B cell (primary cell): ENCODE measurements at regions of chr1 and their contacts with region 1.

Region 1: DNA sequence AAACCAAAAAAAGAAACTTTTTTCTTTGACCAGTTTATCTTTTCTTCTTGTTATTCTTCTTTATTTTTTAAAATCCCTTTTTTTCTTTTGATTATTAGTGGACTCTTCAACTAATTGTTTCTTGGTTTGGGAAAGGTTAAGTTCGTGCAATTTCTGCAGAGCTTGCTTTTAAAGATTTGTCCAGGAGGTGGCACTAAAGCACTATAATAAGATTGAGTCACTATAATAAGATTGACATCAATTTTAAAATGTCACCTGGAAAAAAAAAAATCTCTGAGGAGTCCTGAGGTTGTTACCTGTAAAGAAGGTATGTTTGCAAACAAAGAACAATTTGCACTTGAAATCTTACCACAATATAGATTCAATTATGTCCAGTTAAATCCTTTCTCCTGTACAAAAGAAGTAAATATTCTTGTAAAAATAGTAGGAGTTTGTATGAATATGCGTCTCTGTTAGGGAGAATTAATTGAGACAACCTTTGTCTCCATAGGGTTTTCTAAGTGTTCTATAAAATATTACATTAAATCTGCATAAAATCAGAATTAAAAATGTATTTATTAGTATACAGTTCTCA is 166.7 kb downstream of the ADGRL4 start:
- DNase-seq: peak; percentile 34
- ATAC-seq: no peak
- H3K4me3 ChIP-seq: no peak overlapping the region
- H3K4me3 Mint-ChIP-seq: no peak overlapping the region
- H3K27ac ChIP-seq: no peak overlapping the region
- H3K27ac Mint-ChIP-seq: no peak overlapping the region
- H3K4me1 ChIP-seq: no peaks in the 10 kb centered on the region
- H3K4me1 Mint-ChIP-seq: no peaks in the 10 kb centered on the region
- H3K27me3 ChIP-seq: no peaks in the 10 kb centered on the region
- H3K27me3 Mint-ChIP-seq: no peaks in the 10 kb centered on the region
- CTCF ChIP-seq: peak; percentile 77

Region 2: DNA sequence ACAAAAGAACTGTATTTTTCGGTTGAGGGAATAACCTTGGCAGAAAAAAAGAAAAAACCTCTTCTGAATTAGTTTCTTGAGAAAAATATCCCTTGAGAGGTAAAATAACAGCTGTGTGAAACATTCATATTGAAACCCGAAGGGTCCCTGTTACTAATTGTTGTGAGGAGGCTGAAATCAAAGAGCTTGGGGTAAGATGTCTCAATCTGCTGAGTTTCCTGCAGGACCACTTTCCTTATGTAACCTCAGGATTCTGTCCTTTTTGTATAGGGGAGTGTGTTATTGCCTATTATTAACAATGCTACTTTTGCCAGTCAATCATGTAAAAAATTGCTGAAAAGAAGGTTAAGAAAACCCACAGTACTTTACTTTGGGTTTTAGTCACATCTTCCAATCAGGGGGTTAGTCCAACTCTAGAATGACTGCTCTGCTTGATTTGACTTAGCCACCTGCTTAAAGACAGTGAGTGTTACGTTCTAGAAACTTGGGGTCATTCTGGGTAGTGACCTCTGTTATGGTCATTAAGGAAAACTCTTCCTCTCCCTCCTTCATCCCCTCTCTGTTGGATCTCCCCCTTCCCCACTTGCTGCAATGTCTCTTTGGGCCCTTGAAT is 655.2 kb before region 1 on chr1:
- CTCF ChIA-PET with region 1: no interaction called
- POLR2A ChIA-PET with region 1: no interaction called
- intact Hi-C with region 1: no loop called
- DNase-seq: no peak
- ATAC-seq: no peak
- H3K4me3 ChIP-seq: no peak overlapping the region
- H3K4me3 Mint-ChIP-seq: no peak overlapping the region
- H3K27ac ChIP-seq: no peak overlapping the region
- H3K27ac Mint-ChIP-seq: no peak overlapping the region
- H3K4me1 ChIP-seq: no peaks in the 10 kb centered on the region
- H3K4me1 Mint-ChIP-seq: no peaks in the 10 kb centered on the region
- H3K27me3 ChIP-seq: peaks cover 0 to 6% (median under 1%) of the 10 kb centered on the region in 4 experiments
- H3K27me3 Mint-ChIP-seq: peaks cover 7% of the 10 kb centered on the region
- CTCF ChIP-seq: no peak

Region 3: DNA sequence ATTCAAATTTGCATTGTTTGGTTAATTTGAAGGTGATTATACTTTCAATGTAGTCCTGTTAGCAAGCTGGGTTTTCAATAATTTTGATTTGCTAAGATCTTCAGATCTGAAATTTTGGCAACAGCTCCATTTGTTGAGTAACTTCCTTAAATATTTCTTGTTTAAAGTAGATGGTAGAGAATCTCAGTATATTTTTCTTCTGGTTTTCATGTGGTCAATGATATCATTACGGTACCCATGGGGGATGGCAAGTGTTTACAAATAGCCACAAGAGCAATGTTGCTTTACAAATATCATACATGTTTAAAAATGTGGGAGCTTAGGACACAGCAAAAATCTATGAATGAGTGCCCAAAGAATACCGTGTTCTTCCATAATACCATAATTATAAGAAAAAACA is 14.2 kb before region 1 on chr1:
- CTCF ChIA-PET with region 1: interaction called, 10 read pairs
- POLR2A ChIA-PET with region 1: no interaction called
- intact Hi-C with region 1: no loop called
- DNase-seq: no peak
- ATAC-seq: no peak
- H3K4me3 ChIP-seq: no peak overlapping the region
- H3K4me3 Mint-ChIP-seq: no peak overlapping the region
- H3K27ac ChIP-seq: no peak overlapping the region
- H3K27ac Mint-ChIP-seq: no peak overlapping the region
- H3K4me1 ChIP-seq: no peaks in the 10 kb centered on the region
- H3K4me1 Mint-ChIP-seq: no peaks in the 10 kb centered on the region
- H3K27me3 ChIP-seq: no peaks in the 10 kb centered on the region
- H3K27me3 Mint-ChIP-seq: no peaks in the 10 kb centered on the region
- CTCF ChIP-seq: no peak

Region 4: DNA sequence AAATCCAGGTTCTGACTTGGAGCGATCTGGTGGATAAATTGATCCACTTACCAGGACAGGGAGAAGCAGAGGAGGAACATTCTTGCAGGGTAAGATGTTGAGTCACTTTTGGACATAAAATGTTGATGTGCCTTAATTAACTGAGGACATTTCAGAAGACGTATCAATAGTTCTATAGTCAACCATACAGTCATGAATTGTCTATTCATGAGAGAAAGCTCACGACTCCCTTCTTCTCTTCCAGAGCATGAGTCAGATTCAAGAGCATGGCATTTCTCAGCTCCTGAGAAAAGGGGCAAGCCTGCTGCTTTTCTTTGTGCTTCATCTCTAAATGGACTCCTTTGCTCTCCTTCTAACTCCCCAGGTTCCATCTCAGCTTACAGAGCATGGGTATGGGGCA is 111.0 kb after region 1 on chr1:
- CTCF ChIA-PET with region 1: no interaction called
- POLR2A ChIA-PET with region 1: no interaction called
- intact Hi-C with region 1: no loop called
- DNase-seq: no peak
- ATAC-seq: no peak
- H3K4me3 ChIP-seq: no peak overlapping the region
- H3K4me3 Mint-ChIP-seq: no peak overlapping the region
- H3K27ac ChIP-seq: no peak overlapping the region
- H3K27ac Mint-ChIP-seq: no peak overlapping the region
- H3K4me1 ChIP-seq: no peaks in the 10 kb centered on the region
- H3K4me1 Mint-ChIP-seq: no peaks in the 10 kb centered on the region
- H3K27me3 ChIP-seq: no peaks in the 10 kb centered on the region
- H3K27me3 Mint-ChIP-seq: no peaks in the 10 kb centered on the region
- CTCF ChIP-seq: no peak